ENCODE measurements at regions of chr1 and their contacts with region 1.

Region 1: GRCh38 chr1:236051242-236051791 is 13.6 kb downstream of the NID1 start:
- DNase-seq: no peak
- H3K4me3 Mint-ChIP-seq: no peak overlapping the region
- H3K27ac Mint-ChIP-seq: no peak overlapping the region
- H3K4me1 Mint-ChIP-seq: no peaks in the 10 kb centered on the region
- H3K27me3 Mint-ChIP-seq: no peaks in the 10 kb centered on the region
- CTCF ChIP-seq: no peak

Region 2: GRCh38 chr1:236064674-236065508 is 13.6 kb after region 1 on chr1 and contains the start of gene NID1:
- CTCF ChIA-PET with region 1: interaction called, 12 read pairs
- POLR2A ChIA-PET with region 1: interaction called, 3 read pairs
- intact Hi-C with region 1: no loop called
- DNase-seq: no peak
- H3K4me3 Mint-ChIP-seq: no peak within 1 kb of the TSS
- H3K27ac Mint-ChIP-seq: no peak within 1 kb of the TSS
- H3K4me1 Mint-ChIP-seq: peaks cover 6% of the 10 kb centered on the region
- H3K27me3 Mint-ChIP-seq: no peaks in the 10 kb centered on the region
- CTCF ChIP-seq: no peak
- total RNA-seq, gene NID1: 0.10 and 0.16 TPM in 2 replicates